ENCODE measurements at regions of chr22 and their contacts with region 1.

Region 1: GRCh38 chr22:26534874-26535602 is 22.8 kb upstream of the TFIP11 start:
- DNase-seq: no peak
- ATAC-seq: peak; percentile 50
- H3K4me3 Mint-ChIP-seq: peak overlapping the region; percentile 67
- H3K27ac Mint-ChIP-seq: peak overlapping the region; percentile 94
- H3K4me1 Mint-ChIP-seq: peaks cover 49% of the 10 kb centered on the region
- H3K27me3 Mint-ChIP-seq: no peaks in the 10 kb centered on the region
- CTCF ChIP-seq: no peak

Region 2: GRCh38 chr22:26276529-26277160 is 258.4 kb before region 1 on chr22:
- CTCF ChIA-PET with region 1: no interaction called
- POLR2A ChIA-PET with region 1: no interaction called
- intact Hi-C with region 1: no loop called
- DNase-seq: no peak
- ATAC-seq: no peak
- H3K4me3 Mint-ChIP-seq: no peak overlapping the region
- H3K27ac Mint-ChIP-seq: no peak overlapping the region
- H3K4me1 Mint-ChIP-seq: no peaks in the 10 kb centered on the region
- H3K27me3 Mint-ChIP-seq: peaks cover 10% of the 10 kb centered on the region
- CTCF ChIP-seq: no peak

Region 3: DNA sequence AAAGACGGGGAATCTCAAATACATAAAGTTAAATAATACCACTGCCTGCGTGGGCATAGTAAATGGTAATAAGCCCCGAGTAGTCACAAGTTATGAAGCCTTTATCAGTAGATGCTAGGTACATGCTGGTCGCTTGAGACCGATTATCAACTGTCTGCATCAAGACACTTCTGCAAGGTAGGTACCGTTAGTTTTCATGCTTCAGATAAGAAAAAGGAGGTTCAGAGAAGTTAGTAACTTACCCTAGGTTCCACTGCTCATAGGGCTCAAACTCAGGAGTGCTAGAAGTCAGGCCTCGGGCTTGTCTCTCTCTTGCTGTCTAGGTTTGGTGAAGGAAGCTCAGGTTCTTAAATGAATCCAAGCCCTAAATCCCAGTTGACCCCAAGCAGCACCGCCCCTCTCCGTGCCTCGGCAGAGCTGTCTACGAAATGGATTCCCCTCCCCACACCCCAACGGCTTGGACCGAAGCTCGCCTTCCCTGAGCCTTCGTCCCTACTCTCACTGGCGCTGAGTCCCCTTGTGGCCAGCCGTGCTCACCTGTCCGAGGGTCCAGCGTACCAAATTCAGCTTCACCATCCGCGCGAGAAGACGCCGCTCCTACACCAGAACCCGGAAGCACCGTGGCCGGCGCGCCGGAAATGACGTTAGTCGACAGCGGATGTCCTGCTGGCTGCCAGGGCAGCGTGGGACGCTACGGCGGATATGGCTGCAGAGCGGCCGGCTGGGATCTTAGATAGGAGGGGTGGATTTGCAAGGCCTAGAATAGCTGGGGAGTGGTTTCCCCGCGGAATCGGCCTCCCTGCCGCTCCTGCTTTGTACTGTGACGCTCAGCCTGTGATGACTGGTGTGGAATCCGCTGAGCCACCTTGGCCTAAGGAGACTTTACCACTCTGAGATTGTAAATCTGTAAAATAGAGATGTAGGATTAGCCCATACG is 22.9 kb before region 1 on chr22 and contains the start of gene TFIP11:
- CTCF ChIA-PET with region 1: interaction called, 3 read pairs
- POLR2A ChIA-PET with region 1: interaction called, 13 read pairs
- intact Hi-C with region 1: no loop called
- DNase-seq: peak; percentile 89
- ATAC-seq: peak; percentile 94
- H3K4me3 Mint-ChIP-seq: peak within 1 kb of the TSS; percentile 100
- H3K27ac Mint-ChIP-seq: peak within 1 kb of the TSS; percentile 96
- H3K4me1 Mint-ChIP-seq: peaks cover 39% of the 10 kb centered on the region
- H3K27me3 Mint-ChIP-seq: no peaks in the 10 kb centered on the region
- CTCF ChIP-seq: no peak
- total RNA-seq, gene TFIP11: 59.0 and 62.8 TPM in 2 replicates

Measured in activated B cell treated with CpG ODN at 0.5 μM for 24 hours (primary cell).